Activated naive CD4-positive, alpha-beta T cell treated with anti-CD3 and anti-CD28 coated beads for 36 hours (primary cell): ENCODE measurements at regions of chr2 and their contacts with region 1.

Region 1: DNA sequence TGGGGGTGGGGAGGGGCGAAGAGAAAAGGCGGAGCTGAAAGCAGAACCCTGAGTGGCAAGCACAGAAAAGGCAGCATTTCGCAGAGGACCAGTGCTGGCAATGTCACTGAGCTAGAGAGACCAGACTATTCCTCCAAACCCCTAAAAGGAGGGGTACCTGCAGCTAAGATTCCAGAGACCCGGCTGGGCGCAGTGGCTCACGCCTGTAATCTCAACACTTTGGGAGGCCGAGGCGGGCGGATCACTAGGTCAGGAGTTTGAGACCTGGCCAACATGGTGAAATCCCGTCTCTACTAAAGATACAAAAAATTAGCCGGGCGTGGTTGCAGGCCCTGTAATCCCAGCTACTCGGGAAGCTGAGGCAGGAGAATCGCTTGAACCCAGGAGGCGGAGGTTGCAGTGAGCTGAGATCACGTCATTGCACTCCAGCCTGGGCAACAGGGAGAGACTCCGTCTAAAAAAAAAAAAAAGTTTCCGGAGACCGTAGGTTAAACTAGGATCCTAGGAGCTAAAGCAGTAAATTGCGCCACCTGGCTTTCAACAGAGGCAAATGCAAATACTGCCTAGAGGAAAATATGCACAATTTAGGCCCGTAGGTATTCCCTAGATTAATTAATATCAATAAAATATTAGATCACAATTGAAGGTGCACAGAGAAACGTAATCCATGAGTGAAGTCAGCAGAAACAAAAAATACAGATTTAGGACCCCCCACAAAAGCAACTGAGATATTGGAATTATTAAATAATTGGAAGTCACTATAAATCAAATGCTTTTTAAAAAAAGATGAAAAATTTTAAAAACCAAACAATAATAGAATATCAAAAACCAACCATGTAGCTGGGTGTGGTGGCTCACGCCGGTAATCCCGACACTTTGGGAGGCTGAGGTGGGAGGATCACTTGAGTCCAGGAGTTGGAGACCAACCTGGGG is 4.9 kb downstream of the UCN start:
- DNase-seq: peak; percentile 70
- H3K4me3 Mint-ChIP-seq: peak overlapping the region; percentile 56
- H3K27ac Mint-ChIP-seq: no peak overlapping the region
- H3K4me1 Mint-ChIP-seq: peaks cover 12% of the 10 kb centered on the region
- H3K27me3 Mint-ChIP-seq: peaks cover 12% of the 10 kb centered on the region

Region 2: DNA sequence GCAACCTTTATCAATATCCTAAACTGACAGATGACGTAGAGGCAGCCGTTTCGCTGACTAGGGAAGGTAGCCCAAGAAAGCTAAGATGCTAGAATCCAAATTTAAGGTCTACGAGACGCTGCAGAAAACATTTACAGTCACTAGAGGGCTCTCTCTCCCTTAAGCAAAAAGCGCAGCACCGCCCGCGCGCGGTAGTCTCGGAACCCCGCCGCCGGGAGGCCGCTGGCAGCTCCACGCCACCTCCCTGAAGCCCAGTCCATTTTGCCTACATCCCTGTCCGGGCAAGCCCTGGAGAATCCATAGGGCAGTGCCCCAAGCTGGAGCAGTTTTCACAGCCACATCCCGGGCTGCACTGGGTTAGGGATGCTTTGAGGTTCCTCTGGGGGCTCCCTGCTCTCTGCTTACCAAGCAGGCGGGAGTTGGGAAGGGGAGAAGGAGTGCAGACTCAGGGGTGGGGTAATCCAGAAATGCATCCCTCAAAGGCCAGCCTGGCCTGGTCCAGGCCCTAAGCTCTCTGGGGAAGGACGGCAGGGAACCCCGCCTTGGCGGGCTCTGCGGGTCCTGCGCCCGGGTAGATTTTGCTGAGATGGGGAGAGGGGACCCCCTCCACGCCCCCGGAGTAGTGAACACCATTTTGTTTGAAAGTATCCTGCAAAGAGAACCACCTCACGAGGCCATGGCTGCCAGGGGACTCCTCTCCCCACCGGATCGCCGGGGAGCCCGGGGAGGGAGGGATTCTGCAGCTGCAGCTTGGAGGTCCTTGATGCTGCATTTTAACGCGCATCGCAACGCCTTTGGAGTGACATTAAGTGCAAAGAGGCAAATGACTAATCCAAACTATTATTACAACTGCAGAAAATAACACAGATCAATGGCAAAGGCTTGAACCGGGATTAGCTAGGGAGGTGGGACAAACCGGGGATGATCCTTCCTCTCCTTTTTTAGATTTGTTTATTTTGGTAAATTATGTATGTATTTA is 456.7 kb before region 1 on chr2:
- CTCF ChIA-PET with region 1: interaction called, 3 read pairs
- intact Hi-C with region 1: loop called (anchors 10 kb)
- DNase-seq: peak; percentile 64
- H3K4me3 Mint-ChIP-seq: peak overlapping the region; percentile 21
- H3K27ac Mint-ChIP-seq: no peak overlapping the region
- H3K4me1 Mint-ChIP-seq: peaks cover 15% of the 10 kb centered on the region
- H3K27me3 Mint-ChIP-seq: peaks cover 36% of the 10 kb centered on the region

Region 3: DNA sequence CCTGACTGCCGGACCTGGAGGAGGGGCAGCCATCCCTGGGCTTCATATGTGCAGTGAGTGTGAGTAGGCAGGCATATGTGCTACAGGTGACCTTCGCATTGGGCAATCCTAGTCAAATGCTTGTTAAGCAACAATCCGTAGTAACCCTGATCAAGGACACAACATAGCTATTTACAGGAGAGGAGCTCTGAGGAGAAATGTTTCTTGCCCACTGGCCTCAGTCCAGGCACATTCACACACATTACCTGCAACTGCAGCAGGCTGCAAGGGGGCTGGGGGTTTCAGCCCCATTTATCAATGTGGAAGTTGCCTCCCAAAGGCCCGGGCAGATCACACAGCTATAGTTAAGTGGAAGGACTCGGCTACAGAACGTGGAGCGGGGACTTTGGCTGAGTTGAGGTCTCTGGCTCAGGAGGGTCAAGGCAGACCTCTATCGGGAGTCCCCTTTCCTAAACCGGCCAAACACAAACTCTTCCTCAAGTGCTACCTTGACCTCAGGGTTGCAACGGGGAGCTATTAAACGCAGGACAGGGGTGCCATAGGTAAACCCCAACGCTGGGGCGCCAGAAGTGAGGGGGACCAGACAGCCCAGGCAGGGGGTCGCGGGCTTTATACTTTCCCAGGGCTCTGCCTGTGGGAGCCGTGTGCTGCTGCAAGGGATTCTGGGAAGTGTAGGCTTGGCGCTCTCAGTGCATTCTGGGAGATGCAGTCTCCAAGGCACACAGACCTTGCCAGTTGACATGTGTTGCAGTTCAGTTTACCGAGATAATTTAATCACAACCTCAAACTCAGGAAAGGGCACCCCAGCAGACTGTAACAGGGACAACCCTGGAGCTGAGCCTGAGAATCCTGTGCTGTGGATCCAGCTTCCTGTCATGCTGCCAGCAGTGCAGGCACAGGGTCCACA is 207.4 kb before region 1 on chr2:
- CTCF ChIA-PET with region 1: interaction called, 10 read pairs
- intact Hi-C with region 1: loop called (anchors 1 kb)
- DNase-seq: peak; percentile 66
- H3K4me3 Mint-ChIP-seq: peak overlapping the region; percentile 62
- H3K27ac Mint-ChIP-seq: no peak overlapping the region
- H3K4me1 Mint-ChIP-seq: peaks cover 14% of the 10 kb centered on the region
- H3K27me3 Mint-ChIP-seq: no peaks in the 10 kb centered on the region

Region 4: GRCh38 chr2:27249891-27250651 is 53.3 kb before region 1 on chr2:
- CTCF ChIA-PET with region 1: interaction called, 29 read pairs
- intact Hi-C with region 1: loop called (anchors 1 kb)
- DNase-seq: peak; percentile 76
- H3K4me3 Mint-ChIP-seq: no peak overlapping the region
- H3K27ac Mint-ChIP-seq: no peak overlapping the region
- H3K4me1 Mint-ChIP-seq: no peaks in the 10 kb centered on the region
- H3K27me3 Mint-ChIP-seq: peaks cover 4% of the 10 kb centered on the region

Region 5: GRCh38 chr2:27281855-27282559 is 21.4 kb before region 1 on chr2 and contains the start of gene TRIM54:
- CTCF ChIA-PET with region 1: interaction called, 34 read pairs
- intact Hi-C with region 1: loop called (anchors 1 kb)
- DNase-seq: no peak
- H3K4me3 Mint-ChIP-seq: no peak within 1 kb of the TSS
- H3K27ac Mint-ChIP-seq: no peak within 1 kb of the TSS
- H3K4me1 Mint-ChIP-seq: peaks cover 2% of the 10 kb centered on the region
- H3K27me3 Mint-ChIP-seq: peaks cover 2% of the 10 kb centered on the region
- total RNA-seq, gene TRIM54: not detected

Region 6: DNA sequence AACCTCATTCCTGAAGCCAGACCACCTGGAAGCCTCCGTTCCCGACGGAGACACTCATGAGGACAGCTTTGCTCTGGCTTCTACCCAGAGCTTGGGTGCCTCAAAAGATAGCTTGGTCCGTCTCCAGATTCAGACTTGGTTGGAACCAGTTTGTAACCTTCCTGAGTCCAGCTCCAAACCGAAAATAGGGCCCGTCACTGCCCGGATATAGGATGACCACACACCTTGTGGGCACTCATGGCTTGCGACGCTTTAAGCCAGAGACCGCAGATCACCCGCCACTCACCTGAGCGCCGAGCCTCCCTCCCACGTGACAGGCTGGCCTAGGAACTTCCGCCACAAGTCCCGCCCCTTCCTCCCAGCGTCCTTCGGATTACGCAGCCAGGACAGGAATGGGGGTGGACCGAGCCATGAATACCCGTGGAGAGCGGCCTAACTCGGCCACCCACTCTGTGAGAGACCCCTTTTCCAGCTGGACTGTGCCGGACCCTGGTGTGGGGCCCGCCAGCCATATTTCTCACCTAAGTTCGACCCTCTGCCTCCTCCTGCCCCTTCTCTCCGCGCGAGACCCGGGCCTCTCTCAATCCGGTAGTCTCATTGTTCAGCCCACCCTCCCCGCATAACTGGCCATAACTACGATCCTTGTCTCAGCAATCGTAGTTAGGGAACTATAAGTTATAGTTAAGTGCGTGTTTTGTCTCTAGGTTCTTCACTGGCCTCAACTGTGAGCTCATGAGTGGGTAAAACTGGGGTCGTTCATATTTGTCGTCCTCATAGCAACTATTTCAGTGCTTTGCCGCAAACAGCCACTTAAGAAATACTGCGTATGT is 19.6 kb after region 1 on chr2 and contains the start of gene MPV17:
- CTCF ChIA-PET with region 1: interaction called, 13 read pairs
- intact Hi-C with region 1: no loop called
- DNase-seq: peak; percentile 95
- H3K4me3 Mint-ChIP-seq: peak within 1 kb of the TSS; percentile 84
- H3K27ac Mint-ChIP-seq: peak within 1 kb of the TSS; percentile 85
- H3K4me1 Mint-ChIP-seq: peaks cover 14% of the 10 kb centered on the region
- H3K27me3 Mint-ChIP-seq: no peaks in the 10 kb centered on the region
- total RNA-seq, gene MPV17: 80.2 to 82.3 TPM